Activated CD8-positive, alpha-beta T cell treated with anti-CD3 and anti-CD28 coated beads for 36 hours (primary cell): ENCODE measurements at regions of chr12 and their contacts with region 1.

Region 1: GRCh38 chr12:122336015-122336946 is 70.0 kb upstream of the VPS33A start:
- DNase-seq: peak; percentile 68
- ATAC-seq: peak; percentile 68
- H3K4me3 Mint-ChIP-seq: no peak overlapping the region
- H3K27ac Mint-ChIP-seq: peak overlapping the region; percentile 75
- H3K4me1 Mint-ChIP-seq: peaks cover 7% of the 10 kb centered on the region
- H3K27me3 Mint-ChIP-seq: no peaks in the 10 kb centered on the region
- CTCF ChIP-seq: peak; percentile 79

Region 2: GRCh38 chr12:122322501-122322900 is 13.8 kb before region 1 on chr12:
- CTCF ChIA-PET with region 1: interaction called, 24 read pairs
- POLR2A ChIA-PET with region 1: interaction called, 3 read pairs
- intact Hi-C with region 1: no loop called
- DNase-seq: no peak
- ATAC-seq: no peak
- H3K4me3 Mint-ChIP-seq: no peak overlapping the region
- H3K27ac Mint-ChIP-seq: no peak overlapping the region
- H3K4me1 Mint-ChIP-seq: peaks cover 11% of the 10 kb centered on the region
- H3K27me3 Mint-ChIP-seq: no peaks in the 10 kb centered on the region
- CTCF ChIP-seq: no peak

Region 3: DNA sequence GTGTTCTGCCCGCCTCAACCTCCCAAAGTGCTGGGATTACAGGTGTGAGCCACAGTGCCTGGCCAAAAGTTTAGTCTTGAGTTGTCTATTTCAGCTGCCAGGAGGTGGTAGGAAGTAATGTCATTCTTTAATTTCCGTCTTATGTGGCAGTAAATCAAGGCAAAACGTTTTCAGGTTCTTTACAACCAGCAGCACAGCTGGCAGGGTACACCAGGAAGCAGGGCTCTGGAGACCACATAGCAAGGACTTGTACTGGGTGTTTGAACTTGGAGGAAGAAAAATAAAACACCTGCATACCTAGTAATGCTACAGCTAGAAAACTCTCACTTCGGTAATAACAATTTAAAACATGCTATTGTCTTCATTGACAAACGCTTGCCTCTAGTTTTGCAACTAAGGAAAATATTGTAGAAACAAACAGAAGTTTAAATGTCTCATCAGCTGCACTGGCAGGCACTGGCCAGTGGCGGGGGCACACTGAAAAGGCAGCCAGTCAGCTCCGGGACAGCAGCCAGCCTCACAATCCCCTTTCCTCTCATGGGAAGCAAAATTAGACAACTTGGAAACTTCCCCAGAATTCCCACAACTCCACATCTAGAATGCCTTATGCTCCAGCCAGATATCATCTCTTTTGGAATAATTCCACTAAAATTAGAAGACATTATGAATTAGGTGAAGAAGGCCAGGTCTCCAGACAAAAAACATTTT is 14.0 kb after region 1 on chr12:
- CTCF ChIA-PET with region 1: interaction called, 49 read pairs
- POLR2A ChIA-PET with region 1: no interaction called
- intact Hi-C with region 1: no loop called
- DNase-seq: no peak
- ATAC-seq: no peak
- H3K4me3 Mint-ChIP-seq: no peak overlapping the region
- H3K27ac Mint-ChIP-seq: no peak overlapping the region
- H3K4me1 Mint-ChIP-seq: peaks cover 6% of the 10 kb centered on the region
- H3K27me3 Mint-ChIP-seq: no peaks in the 10 kb centered on the region
- CTCF ChIP-seq: no peak